ENCODE measurements at regions of chr17 and their contacts with region 1.

Region 1: GRCh38 chr17:7862692-7863437 is 5.1 kb downstream of the CYB5D1 start:
- DNase-seq: no peak
- H3K4me3 ChIP-seq: no peak overlapping the region
- H3K27ac ChIP-seq: no peak overlapping the region
- H3K4me1 ChIP-seq: peaks cover 13 to 27% (median 19%) of the 10 kb centered on the region in 4 donors
- H3K27me3 ChIP-seq: no peaks in the 10 kb centered on the region
- CTCF ChIP-seq: peak; percentile 82 to 89 (median 89)
- EP300 ChIP-seq: no peak
- POLR2A ChIP-seq: no peak

Region 2: DNA sequence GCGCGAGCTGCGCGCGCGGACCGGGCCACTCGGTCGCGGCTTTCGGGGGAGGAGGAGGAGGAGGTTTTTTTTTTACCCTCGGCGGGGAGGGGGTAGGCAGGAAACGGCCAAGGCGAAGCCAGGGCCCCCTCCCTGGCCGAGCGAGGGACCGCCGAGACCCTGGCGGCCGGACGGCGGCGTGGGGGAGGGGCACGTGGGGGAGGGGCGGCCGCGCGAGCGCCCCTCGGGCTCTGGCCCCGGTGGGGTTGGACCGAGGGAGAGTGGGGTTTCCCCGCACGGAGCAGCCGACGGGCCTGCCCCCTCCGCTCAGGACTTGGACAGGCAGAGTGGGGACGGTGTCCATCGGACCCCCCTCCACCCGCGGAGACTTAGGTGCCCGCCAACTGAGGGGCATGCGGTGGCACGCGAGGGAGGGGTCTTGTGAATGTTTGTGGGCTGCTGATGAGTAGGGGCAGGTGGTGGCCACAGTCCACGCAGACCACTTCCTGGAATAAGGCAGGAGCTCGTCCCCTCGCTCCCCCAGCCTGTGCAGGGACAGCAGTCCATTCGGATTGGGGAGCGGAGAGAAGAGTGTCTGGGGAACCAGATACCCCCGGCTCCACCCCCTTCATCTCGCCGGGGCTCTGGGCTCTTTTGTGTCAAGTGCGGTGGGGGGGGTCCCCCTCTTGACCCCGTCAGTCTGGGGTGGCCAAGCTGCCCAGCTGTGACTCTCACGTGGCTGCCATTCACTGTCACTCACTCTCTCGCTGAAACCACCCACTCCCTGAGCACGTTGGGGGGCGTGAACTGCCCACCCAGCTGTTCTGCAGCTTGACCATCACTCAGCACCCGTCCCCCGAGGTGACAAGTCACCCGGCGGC is 22.7 kb after region 1 on chr17:
- intact Hi-C with region 1: loop called (anchors 2 kb)
- DNase-seq: no peak
- H3K4me3 ChIP-seq: peak overlapping the region; percentile 84 to 93 (median 90)
- H3K27ac ChIP-seq: peak overlapping the region; percentile 90 to 96 (median 94)
- H3K4me1 ChIP-seq: peaks cover 47 to 86% (median 81%) of the 10 kb centered on the region in 4 donors
- H3K27me3 ChIP-seq: no peaks in the 10 kb centered on the region
- CTCF ChIP-seq: no peak
- EP300 ChIP-seq: no peak
- POLR2A ChIP-seq: no peak

Region 3: DNA sequence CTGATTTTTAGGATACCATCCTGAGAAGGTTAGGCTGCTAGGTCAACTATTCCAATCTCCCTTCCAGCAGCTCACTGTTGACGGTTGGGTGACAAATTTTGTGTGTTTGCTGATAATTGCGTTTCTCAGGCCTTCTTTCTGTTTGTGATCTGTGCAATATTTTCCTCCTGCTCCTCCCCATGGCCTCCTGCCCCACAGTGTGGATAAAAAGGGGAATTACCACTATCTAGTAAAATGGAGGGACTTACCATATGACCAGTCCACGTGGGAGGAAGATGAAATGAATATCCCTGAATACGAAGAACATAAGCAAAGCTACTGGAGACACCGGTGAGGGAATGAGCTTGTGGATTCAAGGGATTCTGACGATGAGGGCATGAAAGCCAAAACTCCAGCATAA is 34.9 kb after region 1 on chr17:
- intact Hi-C with region 1: loop called (anchors 5 kb)
- DNase-seq: no peak
- H3K4me3 ChIP-seq: no peak overlapping the region
- H3K27ac ChIP-seq: no peak overlapping the region
- H3K4me1 ChIP-seq: no peaks in the 10 kb centered on the region
- H3K27me3 ChIP-seq: no peaks in the 10 kb centered on the region
- CTCF ChIP-seq: peak; percentile 43 to 73 (median 59)
- EP300 ChIP-seq: no peak
- POLR2A ChIP-seq: no peak

Region 4: DNA sequence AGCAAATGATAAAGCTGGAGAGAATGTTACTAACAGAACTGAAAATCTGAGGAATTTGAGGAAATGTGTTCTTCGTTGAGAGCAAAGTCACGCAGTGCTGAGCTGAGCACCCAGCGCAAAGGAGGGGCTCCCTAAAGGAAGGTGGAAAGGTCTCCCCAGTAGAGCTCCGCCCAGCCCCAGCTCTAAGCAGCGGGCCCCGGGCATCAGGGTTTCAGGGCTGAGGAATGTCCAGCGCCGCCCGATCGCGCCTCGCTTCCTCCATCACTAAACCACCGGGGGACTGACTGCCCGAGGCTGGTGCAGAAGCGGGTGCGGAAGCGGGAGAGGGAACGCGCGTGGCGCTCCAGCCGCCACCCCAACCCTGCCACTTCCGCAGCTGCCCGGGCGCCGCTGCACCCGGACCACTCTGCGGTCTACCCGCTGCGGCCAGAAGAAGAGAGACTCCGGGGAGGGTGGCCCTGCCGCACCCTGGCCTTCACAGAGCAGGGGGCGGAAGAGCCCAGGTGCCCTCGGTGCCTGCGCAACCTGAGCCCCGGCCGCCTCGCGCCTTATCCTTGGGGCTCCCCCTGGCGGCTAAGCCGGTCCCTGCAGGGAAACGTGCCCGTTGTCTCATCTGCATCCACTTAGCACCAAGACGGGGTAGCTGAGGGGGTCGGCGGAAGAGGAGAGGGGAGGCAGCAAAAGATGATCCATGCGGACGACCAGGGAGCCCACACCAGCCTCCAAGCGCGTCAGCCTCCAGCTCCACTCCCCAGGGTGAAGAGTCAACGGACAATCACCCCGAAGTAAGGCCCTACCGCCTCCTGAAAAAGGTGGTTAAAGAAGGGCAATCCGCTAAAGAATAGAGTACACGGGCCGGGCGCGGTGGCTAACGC is 127.2 kb after region 1 on chr17:
- intact Hi-C with region 1: loop called (anchors 5 kb)
- DNase-seq: peak; percentile 95
- H3K4me3 ChIP-seq: peak overlapping the region; percentile 57 to 79 (median 62)
- H3K27ac ChIP-seq: peak overlapping the region; percentile 21 to 68 (median 36)
- H3K4me1 ChIP-seq: peaks cover 7 to 13% (median 11%) of the 10 kb centered on the region in 4 donors
- H3K27me3 ChIP-seq: no peaks in the 10 kb centered on the region
- CTCF ChIP-seq: peak; percentile 90 to 99 (median 96)
- EP300 ChIP-seq: no peak
- POLR2A ChIP-seq: no peak